Prostate gland (tissue), 2 donors: ENCODE measurements at regions of chr7 and their contacts with region 1.

Region 1: GRCh38 chr7:151519765-151520418 is at the start of gene RHEB:
- DNase-seq: peak; percentile 98
- H3K4me3 ChIP-seq: peak within 1 kb of the TSS; percentile 95 to 97
- H3K27ac ChIP-seq: peak within 1 kb of the TSS; percentile 98 to 99
- H3K4me1 ChIP-seq: peaks cover 3% of the 10 kb centered on the region
- H3K27me3 ChIP-seq: no peaks in the 10 kb centered on the region
- CTCF ChIP-seq: no peak
- POLR2A ChIP-seq: peak; percentile 59
- total RNA-seq, gene RHEB: 59.3 to 63.1 TPM

Region 2: DNA sequence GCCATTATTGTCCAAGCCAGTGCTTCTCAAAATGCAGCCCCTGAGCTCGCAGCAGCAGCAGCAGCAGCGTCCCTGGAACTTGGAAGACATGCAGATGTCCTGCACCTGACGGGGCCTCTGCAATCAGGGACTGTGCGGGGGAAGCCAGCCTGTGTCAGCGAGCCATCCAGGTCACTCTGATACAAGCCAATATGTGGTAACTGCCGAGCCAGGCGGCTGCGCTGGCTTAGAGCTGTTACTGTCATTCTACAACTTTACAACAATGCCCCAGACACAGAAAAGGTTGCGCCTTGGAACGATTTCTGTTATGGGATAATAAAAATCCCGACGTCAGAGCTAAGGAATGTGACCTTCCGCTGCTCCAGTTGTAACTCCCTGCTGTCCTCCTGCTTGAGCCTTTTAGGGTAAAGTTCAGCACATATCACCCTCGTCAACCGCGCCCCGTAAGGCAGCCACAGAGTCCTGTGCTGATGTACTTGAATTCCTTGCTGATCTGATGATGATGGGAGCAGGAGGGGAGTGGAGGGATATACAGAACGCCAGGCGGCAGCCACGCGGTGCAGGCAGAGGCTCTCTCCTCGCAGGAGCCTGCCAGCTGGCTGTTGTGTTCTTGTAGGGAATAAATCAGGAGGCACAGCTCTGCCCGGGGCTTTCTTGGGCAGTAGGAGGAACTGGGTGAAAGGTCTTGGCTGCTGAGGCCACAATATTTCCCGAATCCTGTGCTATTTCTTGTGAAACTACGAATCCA is 60.0 kb before region 1 on chr7:
- intact Hi-C with region 1: loop called (anchors 2 kb)
- DNase-seq: peak; percentile 87
- H3K4me3 ChIP-seq: peak overlapping the region in 1 of 2 donors; percentile 2
- H3K27ac ChIP-seq: peak overlapping the region; percentile 76 to 81
- H3K4me1 ChIP-seq: peaks cover 5% of the 10 kb centered on the region
- H3K27me3 ChIP-seq: no peaks in the 10 kb centered on the region
- CTCF ChIP-seq: peak in 3 of 4 experiments; percentile 29 to 48 (median 45)
- POLR2A ChIP-seq: no peak

Region 3: GRCh38 chr7:151631968-151632749 is 112.3 kb after region 1 on chr7:
- intact Hi-C with region 1: loop called (anchors 2 kb)
- DNase-seq: peak; percentile 86
- H3K4me3 ChIP-seq: peak overlapping the region; percentile 71 to 82
- H3K27ac ChIP-seq: peak overlapping the region; percentile 84 to 95
- H3K4me1 ChIP-seq: peaks cover 3% of the 10 kb centered on the region
- H3K27me3 ChIP-seq: no peaks in the 10 kb centered on the region
- CTCF ChIP-seq: peak; percentile 43 to 54 (median 52)
- POLR2A ChIP-seq: peak; percentile 61

Region 4: DNA sequence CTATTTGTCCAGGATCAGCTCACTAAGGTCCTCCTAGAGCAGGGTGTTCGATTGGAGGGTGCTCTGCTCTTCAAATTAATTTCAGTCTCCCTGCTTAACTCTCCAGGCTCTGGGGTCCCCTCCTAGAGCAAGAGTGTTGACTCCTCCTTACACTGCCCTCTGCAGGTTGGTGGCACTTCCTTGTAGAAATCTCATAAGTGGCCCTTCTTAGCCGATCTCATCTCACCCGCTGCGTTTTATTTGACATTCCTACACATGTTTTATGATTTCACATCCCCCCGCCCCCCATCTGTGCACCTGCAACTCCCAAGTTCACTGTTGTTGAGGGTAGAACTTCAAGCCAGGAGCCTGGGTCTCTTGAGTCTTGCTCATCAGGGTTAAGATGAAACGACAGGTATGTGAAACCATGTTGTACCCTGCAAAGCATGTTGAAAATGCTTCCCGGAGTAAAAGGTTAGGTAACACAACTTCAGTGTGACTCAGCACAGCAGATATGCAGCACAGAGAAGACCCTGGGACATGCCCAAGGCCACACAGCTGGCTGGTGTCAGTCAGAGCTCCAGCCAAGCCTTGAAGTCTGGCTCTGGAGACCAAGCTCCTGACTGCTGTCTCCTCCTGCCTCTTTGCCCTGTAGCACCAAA is 185.9 kb after region 1 on chr7:
- intact Hi-C with region 1: loop called (anchors 5 kb)
- DNase-seq: no peak
- H3K4me3 ChIP-seq: no peak overlapping the region
- H3K27ac ChIP-seq: no peak overlapping the region
- H3K4me1 ChIP-seq: no peaks in the 10 kb centered on the region
- H3K27me3 ChIP-seq: no peaks in the 10 kb centered on the region
- CTCF ChIP-seq: peak in 3 of 4 experiments; percentile 38 to 64 (median 46)
- POLR2A ChIP-seq: no peak